ENCODE measurements at regions of chr18 and their contacts with region 1.

Region 1: GRCh38 chr18:79400091-79400590 is 4.4 kb downstream of the NFATC1 start:
- DNase-seq: no peak

Region 2: GRCh38 chr18:79519751-79520477 is 119.8 kb after region 1 on chr18:
- in situ Hi-C with region 1: loop called (anchors 10 kb)
- DNase-seq: no peak

Measured in KBM-7 (cell line).